H1 (cell line): ENCODE measurements at regions of chr1 and their contacts with region 1.

Region 1: DNA sequence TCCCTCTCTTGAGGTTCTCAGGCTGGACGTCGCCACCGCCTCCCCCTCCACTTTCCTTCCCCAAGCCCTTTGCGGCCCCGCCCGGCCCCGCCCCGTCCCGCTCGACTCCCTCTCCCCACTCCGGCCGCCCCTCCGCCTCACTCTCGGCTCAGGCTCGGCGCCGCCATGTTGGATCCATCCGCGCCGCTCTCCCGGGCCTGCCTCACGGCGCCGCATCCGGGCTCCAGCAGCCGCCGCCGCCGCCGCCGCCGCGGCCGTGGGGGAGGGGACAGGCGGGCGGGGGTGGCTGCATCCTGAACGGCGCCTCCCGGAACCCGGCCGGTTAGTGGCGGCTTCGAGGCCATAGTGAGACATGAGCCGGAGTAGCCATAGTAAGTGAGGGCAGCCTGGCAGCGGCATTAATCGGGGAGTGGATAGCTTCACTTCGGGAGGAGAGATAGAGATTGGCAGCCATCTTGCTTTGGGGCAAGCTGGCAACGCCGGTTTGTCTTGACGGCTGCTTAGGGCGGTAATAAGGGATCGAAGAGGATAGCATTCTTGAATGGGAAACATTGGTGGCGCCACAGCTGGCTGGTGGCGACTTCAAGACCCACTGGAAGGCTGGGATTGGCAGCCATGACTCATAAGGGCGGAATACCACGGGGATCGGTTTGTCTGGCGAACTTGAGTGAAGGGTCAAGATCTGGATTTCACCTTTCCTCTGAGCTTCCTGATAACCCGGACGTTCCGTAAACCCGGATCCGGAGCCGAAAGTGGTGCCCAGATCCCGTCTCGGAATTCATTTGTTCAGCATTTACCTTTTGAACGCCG is at the start of gene DEDD:
- DNase-seq: peak; percentile 90 to 96
- H3K4me3 ChIP-seq: peak within 1 kb of the TSS; percentile 71 to 97 (median 84)
- H3K27ac ChIP-seq: peak within 1 kb of the TSS; percentile 95
- H3K4me1 ChIP-seq: no peaks in the 10 kb centered on the region; a peak in 1 of 7 replicates
- H3K27me3 ChIP-seq: no peaks in the 10 kb centered on the region
- CTCF ChIP-seq: peak in 1 of 3 experiments; percentile 31; a peak in 1 of 4 replicates
- EP300 ChIP-seq: no peak; a peak in 1 of 3 replicates
- POLR2A ChIP-seq: peak; percentile 59 to 71
- RAD21 ChIP-seq: no peak
- total RNA-seq, gene DEDD: 42.0 and 42.6 TPM in 2 replicates

Region 2: GRCh38 chr1:160971618-160972056 is 161.0 kb before region 1 on chr1:
- CTCF ChIA-PET with region 1: no interaction called
- POLR2A ChIA-PET with region 1: no interaction called
- DNase-seq: no peak
- H3K4me3 ChIP-seq: peak overlapping the region in 1 of 4 experiments; percentile 34; a peak in 1 of 8 replicates
- H3K27ac ChIP-seq: no peak overlapping the region
- H3K4me1 ChIP-seq: peaks cover 4 to 13% (median 11%) of the 10 kb centered on the region in 4 experiments; a peak in 6 of 7 replicates
- H3K27me3 ChIP-seq: no peaks in the 10 kb centered on the region
- CTCF ChIP-seq: no peak
- EP300 ChIP-seq: no peak
- POLR2A ChIP-seq: no peak
- RAD21 ChIP-seq: no peak

Region 3: GRCh38 chr1:161021165-161021960 is 111.3 kb before region 1 on chr1:
- CTCF ChIA-PET with region 1: no interaction called
- POLR2A ChIA-PET with region 1: interaction called, 12 read pairs
- DNase-seq: peak; percentile 93 to 99
- H3K4me3 ChIP-seq: peak overlapping the region; percentile 79 to 97 (median 95)
- H3K27ac ChIP-seq: peak overlapping the region; percentile 74; the same call in 1 of the 2 replicates
- H3K4me1 ChIP-seq: peaks cover 7 to 17% (median 13%) of the 10 kb centered on the region in 4 experiments
- H3K27me3 ChIP-seq: no peaks in the 10 kb centered on the region
- CTCF ChIP-seq: no peak; a peak in 1 of 4 replicates
- EP300 ChIP-seq: no peak; a peak in 1 of 3 replicates
- POLR2A ChIP-seq: peak; percentile 87 to 95
- RAD21 ChIP-seq: no peak; a peak in 1 of 4 replicates

Region 4: GRCh38 chr1:161153679-161154426 is 21.2 kb after region 1 on chr1 and contains the start of gene UFC1:
- CTCF ChIA-PET with region 1: interaction called, 10 read pairs
- POLR2A ChIA-PET with region 1: interaction called, 130 read pairs
- DNase-seq: peak in 1 of 2 experiments; percentile 80
- H3K4me3 ChIP-seq: peak within 1 kb of the TSS; percentile 91 to 99 (median 96)
- H3K27ac ChIP-seq: peak within 1 kb of the TSS; percentile 98
- H3K4me1 ChIP-seq: peaks cover 0 to 7% (median under 1%) of the 10 kb centered on the region in 4 experiments; a peak in 3 of 7 replicates
- H3K27me3 ChIP-seq: no peaks in the 10 kb centered on the region
- CTCF ChIP-seq: no peak
- EP300 ChIP-seq: 0 out of 3 replicates have a peak, but pooled peaks of 1 of the 2 experiments have one; percentile 2
- POLR2A ChIP-seq: peak; percentile 84 to 94
- RAD21 ChIP-seq: no peak
- total RNA-seq, gene UFC1: 67.8 and 71.0 TPM in 2 replicates

Region 5: GRCh38 chr1:161165742-161166668 is 33.4 kb after region 1 on chr1 and contains the start of gene PPOX:
- CTCF ChIA-PET with region 1: interaction called, 29 read pairs
- POLR2A ChIA-PET with region 1: interaction called, 26 read pairs
- DNase-seq: peak; percentile 90 to 94
- H3K4me3 ChIP-seq: peak within 1 kb of the TSS; percentile 64 to 87 (median 82)
- H3K27ac ChIP-seq: peak within 1 kb of the TSS; percentile 47
- H3K4me1 ChIP-seq: peaks cover 0 to 7% (median 5%) of the 10 kb centered on the region in 4 experiments; a peak in 4 of 7 replicates
- H3K27me3 ChIP-seq: no peaks in the 10 kb centered on the region
- CTCF ChIP-seq: peak; percentile 45 to 55 (median 50)
- EP300 ChIP-seq: 0 out of 3 replicates have a peak, but pooled peaks of 1 of the 2 experiments have one; percentile 14
- POLR2A ChIP-seq: peak; percentile 56 to 84
- RAD21 ChIP-seq: no peak
- total RNA-seq, gene PPOX: 32.1 and 40.4 TPM in 2 replicates

Region 6: DNA sequence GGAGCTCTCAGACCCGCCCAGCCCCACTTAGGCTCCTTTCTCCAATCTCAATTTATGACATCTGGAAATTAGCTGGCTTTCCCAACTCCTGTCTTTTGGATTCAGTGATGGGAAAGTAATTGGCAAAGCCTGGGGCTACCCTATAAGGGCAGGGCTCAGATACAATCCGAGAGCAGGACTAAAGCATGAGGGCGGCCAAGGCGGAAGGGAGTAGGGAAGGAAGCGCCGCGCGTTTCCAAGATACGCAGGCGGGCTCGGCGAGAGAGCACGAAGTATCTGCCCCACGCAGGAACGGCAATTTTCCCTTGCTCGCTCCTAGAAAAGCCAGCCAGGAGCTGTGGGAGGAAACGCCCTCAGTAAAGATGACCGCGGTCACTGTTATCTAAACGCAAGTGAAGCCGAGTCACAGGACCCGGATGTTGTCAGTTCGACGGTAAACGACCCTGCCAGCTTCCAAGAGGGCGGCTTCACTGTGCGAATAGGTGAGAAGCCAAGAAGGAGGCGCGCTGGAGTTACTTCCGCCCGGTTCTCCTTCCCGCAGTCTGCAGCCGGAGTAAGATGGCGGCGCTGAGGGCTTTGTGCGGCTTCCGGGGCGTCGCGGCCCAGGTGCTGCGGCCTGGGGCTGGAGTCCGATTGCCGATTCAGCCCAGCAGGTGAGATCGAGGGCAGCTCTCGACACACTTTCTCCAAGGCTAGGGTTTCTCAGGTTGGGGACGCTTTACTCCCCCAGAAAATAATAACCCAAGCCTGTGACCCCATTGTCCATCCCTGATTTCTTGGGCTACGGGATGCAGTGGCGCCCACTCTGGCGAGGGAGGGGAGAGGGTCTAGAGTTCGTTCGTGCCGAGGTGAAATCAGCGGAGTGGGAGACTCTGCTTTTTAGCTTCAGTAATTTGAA is 69.5 kb after region 1 on chr1 and contains the start of gene NDUFS2:
- CTCF ChIA-PET with region 1: interaction called, 3 read pairs
- POLR2A ChIA-PET with region 1: interaction called, 12 read pairs
- DNase-seq: peak; percentile 89 to 95
- H3K4me3 ChIP-seq: peak within 1 kb of the TSS; percentile 63 to 97 (median 93)
- H3K27ac ChIP-seq: peak within 1 kb of the TSS; percentile 94
- H3K4me1 ChIP-seq: peaks cover 20 to 48% (median 42%) of the 10 kb centered on the region in 4 experiments
- H3K27me3 ChIP-seq: no peaks in the 10 kb centered on the region
- CTCF ChIP-seq: peak; percentile 31 to 62 (median 49)
- EP300 ChIP-seq: no peak
- POLR2A ChIP-seq: peak; percentile 97 to 99
- RAD21 ChIP-seq: peak in 1 of 2 experiments; percentile 23; a peak in 1 of 4 replicates
- total RNA-seq, gene NDUFS2: 88.7 and 95.1 TPM in 2 replicates